A549 (cell line): ENCODE measurements at regions of chr1 and their contacts with region 1.

Region 1: GRCh38 chr1:201361652-201362504 is 15.6 kb downstream of the TNNT2 start:
- DNase-seq: peak; percentile 47 to 96
- ATAC-seq: peak; percentile 75 to 91; a peak in 5 of 6 replicates
- H3K4me3 ChIP-seq: no peak overlapping the region
- H3K27ac ChIP-seq: peak overlapping the region in 1 of 2 experiments; percentile 50; a peak in 3 of 6 replicates
- H3K4me1 ChIP-seq: no peaks in the 10 kb centered on the region; the same call in 2 of the 3 replicates
- CTCF ChIP-seq: peak; percentile 91
- EP300 ChIP-seq: no peak
- POLR2A ChIP-seq: no peak
- RAD21 ChIP-seq: peak; percentile 96 to 99

Region 2: GRCh38 chr1:201224666-201225370 is 137.1 kb before region 1 on chr1:
- CTCF ChIA-PET with region 1: interaction called, 17 read pairs
- POLR2A ChIA-PET with region 1: no interaction called
- DNase-seq: no peak
- ATAC-seq: no peak
- H3K4me3 ChIP-seq: no peak overlapping the region
- H3K27ac ChIP-seq: no peak overlapping the region
- H3K4me1 ChIP-seq: 0 out of 3 replicates have a peak, but pooled peaks cover 4% of the 10 kb centered on the region
- CTCF ChIP-seq: no peak
- EP300 ChIP-seq: no peak
- POLR2A ChIP-seq: no peak
- RAD21 ChIP-seq: no peak

Region 3: GRCh38 chr1:201282931-201283829 is 78.7 kb before region 1 on chr1 and contains the start of gene PKP1:
- CTCF ChIA-PET with region 1: interaction called, 14 read pairs
- POLR2A ChIA-PET with region 1: no interaction called
- DNase-seq: no peak
- ATAC-seq: no peak; a peak in 1 of 6 replicates
- H3K4me3 ChIP-seq: no peak within 1 kb of the TSS
- H3K27ac ChIP-seq: no peak within 1 kb of the TSS; a peak in 1 of 6 replicates
- H3K4me1 ChIP-seq: peaks cover 5% of the 10 kb centered on the region; the same call in 2 of the 3 replicates
- CTCF ChIP-seq: no peak
- EP300 ChIP-seq: no peak
- POLR2A ChIP-seq: no peak
- RAD21 ChIP-seq: no peak
- polyA plus RNA-seq, gene PKP1: not detected in 2 replicates

Region 4: DNA sequence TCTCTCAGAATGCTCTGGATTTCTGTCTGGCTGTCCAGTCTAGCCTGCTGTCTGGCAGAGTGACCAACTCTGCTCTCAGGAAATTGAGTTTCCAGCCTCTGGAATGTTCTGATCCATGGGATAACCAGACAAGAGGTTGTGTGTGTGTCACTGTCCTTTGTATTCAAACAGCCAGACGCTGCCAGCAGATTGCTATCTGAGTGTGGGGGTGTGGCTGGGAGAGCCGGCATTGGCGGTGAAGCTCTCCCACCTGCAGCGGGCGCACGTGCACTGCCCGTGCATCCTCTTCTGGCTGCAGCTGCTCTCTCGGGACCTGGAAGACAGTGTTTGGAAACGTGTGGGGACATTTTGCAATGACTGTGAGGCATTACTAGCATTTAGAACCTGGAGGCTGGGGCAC is 52.5 kb before region 1 on chr1:
- CTCF ChIA-PET with region 1: interaction called, 18 read pairs
- POLR2A ChIA-PET with region 1: no interaction called
- DNase-seq: peak; percentile 48 to 62
- ATAC-seq: peak; percentile 31 to 57; a peak in 5 of 6 replicates
- H3K4me3 ChIP-seq: no peak overlapping the region
- H3K27ac ChIP-seq: peak overlapping the region; percentile 59 to 63; a peak in 4 of 6 replicates
- H3K4me1 ChIP-seq: peaks cover 48% of the 10 kb centered on the region
- CTCF ChIP-seq: no peak
- EP300 ChIP-seq: no peak
- POLR2A ChIP-seq: no peak
- RAD21 ChIP-seq: peak in 1 of 2 experiments; percentile 33; a peak in 3 of 5 replicates

Region 5: DNA sequence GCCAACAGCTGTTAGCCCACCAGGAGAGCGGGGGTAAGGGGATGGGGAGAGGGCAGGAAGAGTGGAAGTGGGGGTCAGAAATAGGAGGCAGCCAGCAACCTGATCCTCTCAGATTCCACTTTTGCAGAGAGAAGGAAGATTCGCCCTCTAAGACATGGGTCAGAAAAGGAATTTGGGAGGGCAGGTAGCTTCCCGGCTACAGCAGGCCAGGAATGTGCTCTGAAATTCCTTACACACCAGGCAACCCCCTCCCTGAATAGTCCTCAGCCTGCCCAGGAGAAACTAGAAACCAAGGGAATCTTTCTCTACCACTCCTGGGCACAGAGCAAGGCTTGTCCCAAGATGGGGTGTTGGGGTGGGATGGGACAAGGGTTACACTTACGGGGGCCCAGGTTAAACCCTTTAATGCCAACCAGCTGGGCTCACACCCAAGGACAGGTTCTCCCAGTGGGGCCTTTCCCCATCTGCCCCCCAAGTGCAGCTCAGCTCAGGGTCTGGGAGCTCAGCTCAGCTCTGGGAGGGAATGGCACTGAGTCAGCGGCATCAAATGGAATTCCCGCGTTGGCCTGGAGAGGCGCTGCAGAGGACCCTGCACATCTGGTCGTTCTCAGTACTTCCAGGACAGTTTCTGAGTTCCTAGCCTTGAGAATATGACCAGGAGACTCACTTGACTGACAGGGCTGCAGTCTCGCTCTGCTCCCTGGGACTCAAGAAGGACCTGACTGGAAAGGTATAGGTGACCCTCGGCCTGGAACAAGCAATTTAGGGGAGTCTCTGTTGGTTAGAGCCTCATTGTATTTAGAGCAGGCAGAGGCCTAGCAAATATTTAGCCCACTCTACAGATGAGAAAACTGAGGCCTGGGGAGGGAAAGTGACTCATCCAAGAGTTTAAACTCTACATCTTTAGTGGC is 14.8 kb after region 1 on chr1:
- CTCF ChIA-PET with region 1: interaction called, 104 read pairs
- POLR2A ChIA-PET with region 1: no interaction called
- DNase-seq: peak; percentile 47 to 77
- ATAC-seq: peak; percentile 57 to 88; a peak in 3 of 6 replicates
- H3K4me3 ChIP-seq: no peak overlapping the region
- H3K27ac ChIP-seq: 0 out of 6 replicates have a peak overlapping the region, but pooled peaks of 1 of the 2 experiments have one; percentile 11
- H3K4me1 ChIP-seq: no peaks in the 10 kb centered on the region
- CTCF ChIP-seq: peak; percentile 32
- EP300 ChIP-seq: no peak
- POLR2A ChIP-seq: no peak
- RAD21 ChIP-seq: no peak

Region 6: GRCh38 chr1:201408176-201408833 is 46.4 kb after region 1 on chr1:
- CTCF ChIA-PET with region 1: interaction called, 63 read pairs
- POLR2A ChIA-PET with region 1: no interaction called
- DNase-seq: peak; percentile 80 to 93
- ATAC-seq: peak; percentile 74 to 91
- H3K4me3 ChIP-seq: no peak overlapping the region
- H3K27ac ChIP-seq: peak overlapping the region; percentile 82 to 92
- H3K4me1 ChIP-seq: peaks cover 57% of the 10 kb centered on the region
- CTCF ChIP-seq: peak; percentile 95
- EP300 ChIP-seq: no peak
- POLR2A ChIP-seq: no peak
- RAD21 ChIP-seq: peak; percentile 88

Region 7: GRCh38 chr1:201481761-201482493 is 120.0 kb after region 1 on chr1:
- CTCF ChIA-PET with region 1: no interaction called
- POLR2A ChIA-PET with region 1: no interaction called
- DNase-seq: peak; percentile 86 to 92
- ATAC-seq: peak; percentile 55 to 83
- H3K4me3 ChIP-seq: no peak overlapping the region
- H3K27ac ChIP-seq: peak overlapping the region; percentile 77 to 86
- H3K4me1 ChIP-seq: peaks cover 50% of the 10 kb centered on the region
- CTCF ChIP-seq: peak; percentile 93
- EP300 ChIP-seq: no peak
- POLR2A ChIP-seq: no peak
- RAD21 ChIP-seq: peak; percentile 97 to 98